ENCODE measurements at regions of chr3 and their contacts with region 1.

Region 1: GRCh38 chr3:111947231-111947630 is 31.6 kb upstream of the ABHD10 start:
- DNase-seq: peak; percentile 75
- ATAC-seq: peak; percentile 53
- H3K4me3 ChIP-seq: no peak overlapping the region
- H3K27ac ChIP-seq: no peak overlapping the region
- H3K4me1 ChIP-seq: peaks cover 7% of the 10 kb centered on the region; the same call in 1 of the 2 replicates
- H3K27me3 ChIP-seq: no peaks in the 10 kb centered on the region
- CTCF ChIP-seq: no peak
- POLR2A ChIP-seq: no peak
- RAD21 ChIP-seq: no peak

Region 2: GRCh38 chr3:111904376-111905241 is 42.6 kb before region 1 on chr3:
- CTCF ChIA-PET with region 1: no interaction called
- POLR2A ChIA-PET with region 1: no interaction called
- dilution Hi-C with region 1: no loop called
- in situ Hi-C with region 1: no loop called
- intact Hi-C with region 1: loop called (anchors 1 kb)
- DNase-seq: peak; percentile 92
- ATAC-seq: peak; percentile 70
- H3K4me3 ChIP-seq: no peak overlapping the region
- H3K27ac ChIP-seq: no peak overlapping the region; the same call in 1 of the 2 replicates
- H3K4me1 ChIP-seq: peaks cover 12% of the 10 kb centered on the region
- H3K27me3 ChIP-seq: no peaks in the 10 kb centered on the region
- CTCF ChIP-seq: 0 out of 2 replicates have a peak, but pooled peaks have one; percentile 19
- POLR2A ChIP-seq: no peak
- RAD21 ChIP-seq: no peak

Measured in IMR-90 (cell line).